Common myeloid progenitor, CD34-positive (primary cell): ENCODE measurements at regions of chr2 and their contacts with region 1.

Region 1: GRCh38 chr2:3450375-3451010 is 68.8 kb downstream of the ADI1 start:
- DNase-seq: no peak
- H3K4me3 ChIP-seq: no peak overlapping the region
- H3K27ac ChIP-seq: no peak overlapping the region
- H3K4me1 ChIP-seq: peaks cover 0 to 4% (median 0%) of the 10 kb centered on the region in 4 experiments
- H3K27me3 ChIP-seq: no peaks in the 10 kb centered on the region

Region 2: DNA sequence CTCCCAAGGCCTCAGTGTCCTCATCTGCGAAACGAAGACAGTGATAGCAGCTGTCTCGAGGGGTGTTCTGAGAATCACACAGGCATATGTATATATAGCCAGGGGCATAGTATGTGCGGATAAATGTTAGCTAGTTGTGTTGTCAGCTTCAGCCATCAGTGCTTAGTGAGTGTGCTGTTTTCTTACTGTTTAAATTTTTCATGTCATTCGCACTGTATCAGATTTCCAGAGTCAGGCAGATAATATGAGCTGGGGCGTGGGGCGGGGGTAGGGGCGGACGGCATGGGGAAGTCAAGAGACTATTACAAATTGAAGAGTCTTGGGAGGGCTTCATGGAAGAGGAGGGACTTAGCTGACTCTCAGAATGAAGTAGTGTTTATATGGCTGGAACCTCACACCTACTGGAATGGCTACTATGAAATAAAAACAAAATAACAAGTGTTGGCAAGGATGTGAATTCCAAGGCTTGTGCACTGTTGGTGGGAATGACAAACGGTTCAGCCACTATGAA is 64.0 kb before region 1 on chr2:
- CTCF ChIA-PET with region 1: no interaction called
- POLR2A ChIA-PET with region 1: no interaction called
- DNase-seq: no peak
- H3K4me3 ChIP-seq: no peak overlapping the region
- H3K27ac ChIP-seq: no peak overlapping the region
- H3K4me1 ChIP-seq: no peaks in the 10 kb centered on the region
- H3K27me3 ChIP-seq: no peaks in the 10 kb centered on the region

Region 3: GRCh38 chr2:3461801-3462492 is 11.5 kb after region 1 on chr2:
- CTCF ChIA-PET with region 1: interaction called, 10 read pairs
- POLR2A ChIA-PET with region 1: no interaction called
- DNase-seq: peak; percentile 50 to 78 (median 65)
- H3K4me3 ChIP-seq: no peak overlapping the region
- H3K27ac ChIP-seq: no peak overlapping the region
- H3K4me1 ChIP-seq: no peaks in the 10 kb centered on the region
- H3K27me3 ChIP-seq: no peaks in the 10 kb centered on the region